AG04450 (cell line): ENCODE measurements at regions of chr20 and their contacts with region 1.

Region 1: GRCh38 chr20:36881888-36882287 is 6.0 kb downstream of the TLDC2 start:
- DNase-seq: no peak
- H3K4me3 ChIP-seq: no peak overlapping the region
- H3K27ac ChIP-seq: no peak overlapping the region
- H3K27me3 ChIP-seq: peaks cover 15% of the 10 kb centered on the region
- CTCF ChIP-seq: no peak

Region 2: DNA sequence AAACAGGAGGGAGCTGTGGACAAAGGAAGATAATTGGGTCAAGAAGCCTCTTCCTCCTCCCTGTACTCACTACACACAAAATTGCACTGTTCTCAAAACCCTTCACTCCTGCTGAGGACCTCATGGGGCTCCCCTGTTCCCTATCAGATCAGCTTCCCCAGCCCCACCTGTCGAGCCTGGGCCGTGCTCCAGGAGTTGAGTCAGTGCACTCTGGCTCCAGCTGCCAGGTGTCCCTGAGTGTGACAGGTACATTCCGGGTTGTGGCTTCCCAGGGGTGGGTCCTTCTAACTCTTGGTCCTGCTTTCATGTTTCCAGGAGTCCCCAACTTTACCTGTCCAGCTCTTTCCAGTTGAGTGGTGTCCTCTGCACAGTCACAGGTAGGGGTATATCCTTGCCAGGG is 267.9 kb before region 1 on chr20:
- CTCF ChIA-PET with region 1: interaction called, 22 read pairs
- POLR2A ChIA-PET with region 1: no interaction called
- DNase-seq: no peak
- H3K4me3 ChIP-seq: no peak overlapping the region
- H3K27ac ChIP-seq: no peak overlapping the region
- H3K27me3 ChIP-seq: no peaks in the 10 kb centered on the region
- CTCF ChIP-seq: no peak

Region 3: DNA sequence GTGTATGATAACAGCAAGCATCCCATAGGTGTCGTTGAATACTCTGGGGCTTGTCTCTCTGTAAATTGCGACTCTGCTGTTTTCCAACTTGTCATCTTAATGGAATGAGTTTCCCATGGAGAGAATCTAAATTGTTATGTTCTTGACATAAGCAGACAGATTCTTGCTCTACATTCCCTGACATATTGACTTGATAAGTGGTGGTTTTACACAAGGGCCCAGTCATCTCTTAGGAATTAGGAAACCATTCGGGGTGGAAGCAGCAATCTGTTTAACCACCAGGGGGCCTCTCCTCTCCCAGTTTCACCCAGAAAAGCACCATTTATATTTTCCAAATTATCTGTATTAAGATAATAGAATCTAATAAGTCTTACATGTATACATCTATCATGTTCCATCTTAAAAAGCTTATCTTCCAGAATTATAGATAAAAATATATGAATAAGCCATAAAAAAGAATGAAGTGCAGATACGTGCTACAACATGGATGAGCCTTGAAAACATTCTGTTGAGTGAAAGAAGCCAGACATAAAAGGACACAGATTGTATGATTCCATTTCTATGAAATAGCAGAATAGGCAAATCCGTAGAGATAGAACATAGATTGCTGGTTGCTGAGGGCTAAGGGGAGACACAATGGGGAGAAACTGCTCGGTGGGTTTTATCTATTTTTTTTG is 320.5 kb after region 1 on chr20:
- CTCF ChIA-PET with region 1: no interaction called
- POLR2A ChIA-PET with region 1: no interaction called
- DNase-seq: peak; percentile 90
- H3K4me3 ChIP-seq: peak overlapping the region; percentile 36
- H3K27ac ChIP-seq: peak overlapping the region; percentile 79
- H3K27me3 ChIP-seq: no peaks in the 10 kb centered on the region
- CTCF ChIP-seq: peak; percentile 91